ENCODE measurements at regions of chr7 and their contacts with region 1.

Region 1: GRCh38 chr7:137846827-137847567 is at the start of gene DGKI:
- DNase-seq: peak in 1 of 2 donors; percentile 69
- H3K4me3 ChIP-seq: peak within 1 kb of the TSS; percentile 68 to 78
- H3K27ac ChIP-seq: peak within 1 kb of the TSS; percentile 31 to 39
- H3K4me1 ChIP-seq: no peaks in the 10 kb centered on the region
- H3K27me3 ChIP-seq: no peaks in the 10 kb centered on the region
- CTCF ChIP-seq: no peak
- total RNA-seq, gene DGKI: 13.4 TPM

Region 2: GRCh38 chr7:137772748-137773147 is 74.2 kb before region 1 on chr7:
- intact Hi-C with region 1: loop called (anchors 5 kb)
- DNase-seq: no peak
- H3K4me3 ChIP-seq: no peak overlapping the region
- H3K27ac ChIP-seq: no peak overlapping the region
- H3K4me1 ChIP-seq: peaks cover 0 to 21% of the 10 kb centered on the region in 2 donors
- H3K27me3 ChIP-seq: no peaks in the 10 kb centered on the region
- CTCF ChIP-seq: no peak

Region 3: DNA sequence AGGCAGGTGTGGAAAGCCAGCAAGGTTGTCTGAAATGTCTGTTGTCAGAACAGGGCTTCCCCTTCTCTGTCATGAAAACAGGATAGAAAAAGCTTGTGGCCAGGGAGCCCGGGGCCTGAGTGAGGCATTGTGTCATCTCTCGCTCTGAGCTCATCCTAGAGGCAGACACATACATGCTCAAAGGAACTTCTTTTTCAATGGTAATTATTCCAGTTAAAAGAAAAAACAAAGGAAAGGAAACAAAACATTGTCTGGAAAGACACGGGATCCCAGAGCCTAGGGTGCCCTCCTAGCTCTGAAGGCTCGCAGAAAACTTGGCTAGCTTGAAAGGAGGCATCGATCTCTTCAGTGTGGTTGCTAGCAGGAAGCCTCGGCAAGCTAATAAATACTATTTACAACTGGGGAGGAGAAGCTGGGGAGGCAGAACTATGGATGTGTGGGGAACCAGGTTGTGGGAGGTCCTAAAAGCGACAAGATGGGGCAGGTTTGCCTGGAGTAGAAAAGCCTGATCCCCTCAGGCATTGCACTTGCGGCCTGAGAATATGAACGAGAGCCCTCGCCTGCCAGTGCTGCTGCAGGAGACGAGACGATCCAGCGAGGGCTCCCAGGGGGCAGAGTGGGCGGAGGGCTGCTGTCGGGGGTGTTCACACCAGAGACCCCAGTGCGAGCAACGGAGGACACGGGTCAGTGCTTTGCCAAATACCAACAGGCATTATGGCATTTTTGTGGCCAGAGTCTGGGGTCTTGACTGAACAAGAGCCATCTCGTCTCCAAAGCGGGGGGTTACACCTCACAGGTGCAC is 32.6 kb after region 1 on chr7:
- intact Hi-C with region 1: loop called (anchors 2 kb)
- DNase-seq: no peak
- H3K4me3 ChIP-seq: no peak overlapping the region
- H3K27ac ChIP-seq: peak overlapping the region; percentile 70 to 76
- H3K4me1 ChIP-seq: peaks cover 10 to 62% of the 10 kb centered on the region in 2 donors
- H3K27me3 ChIP-seq: no peaks in the 10 kb centered on the region
- CTCF ChIP-seq: no peak

Measured in ascending aorta (tissue), 2 donors.